ENCODE measurements at regions of chr14 and their contacts with region 1.

Region 1: DNA sequence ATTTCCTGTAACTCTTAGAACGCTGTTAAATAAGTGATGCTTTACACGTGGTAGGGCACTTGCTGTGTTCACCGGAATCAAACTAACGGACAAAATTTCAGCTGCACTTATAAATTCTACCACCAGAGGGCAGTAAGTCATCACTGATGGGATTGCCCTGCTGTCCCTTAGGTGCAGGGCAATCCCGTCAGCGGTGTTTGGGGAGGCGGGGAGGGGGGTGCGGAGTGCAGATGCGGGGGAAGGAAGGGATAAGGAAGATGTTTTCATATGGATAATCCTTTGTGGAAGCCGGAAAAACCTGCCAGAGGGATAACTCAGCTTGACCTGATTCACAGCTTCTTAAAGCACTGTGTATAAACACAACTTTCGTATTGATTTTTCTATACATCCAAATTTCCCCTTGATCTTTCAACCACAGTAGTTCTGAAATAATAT is 21.7 kb upstream of the SLC10A1 start:
- DNase-seq: peak; percentile 65
- ATAC-seq: peak; percentile 82
- H3K4me3 Mint-ChIP-seq: no peak overlapping the region
- H3K27ac Mint-ChIP-seq: no peak overlapping the region
- H3K4me1 Mint-ChIP-seq: peaks cover 4% of the 10 kb centered on the region
- H3K27me3 Mint-ChIP-seq: peaks cover 4% of the 10 kb centered on the region

Region 2: DNA sequence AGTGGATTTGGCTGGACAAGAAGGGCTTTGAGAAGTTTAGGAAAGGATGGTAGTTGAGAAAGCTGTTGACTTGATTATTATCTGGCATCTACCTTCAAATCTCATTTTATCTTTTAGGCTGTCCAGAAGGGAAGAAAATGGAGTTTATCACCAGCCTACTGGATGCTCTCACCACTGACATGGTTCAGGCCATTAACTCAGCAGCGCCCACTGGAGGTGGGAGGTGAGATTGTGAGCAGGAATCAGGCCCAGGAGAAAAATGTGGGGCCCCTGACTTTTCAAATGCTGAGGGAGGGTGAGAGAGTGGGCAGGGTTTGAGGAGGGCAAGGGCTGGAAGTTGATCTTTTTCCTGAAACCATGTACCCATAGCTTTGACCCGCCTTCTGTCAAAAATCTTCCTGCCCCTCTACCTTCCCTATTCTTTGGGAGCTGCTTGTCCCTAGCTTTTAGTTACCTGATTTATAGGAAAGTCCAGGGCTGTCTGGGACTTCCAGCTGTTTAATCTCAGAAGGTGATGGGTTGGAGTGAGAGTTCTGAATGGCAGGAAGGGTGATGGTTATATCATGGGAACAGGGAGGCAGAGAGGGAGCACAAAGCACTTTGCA is 194.6 kb after region 1 on chr14:
- CTCF ChIA-PET with region 1: interaction called, 5 read pairs
- POLR2A ChIA-PET with region 1: no interaction called
- intact Hi-C with region 1: loop called (anchors 1 to 5 kb)
- DNase-seq: peak; percentile 77
- ATAC-seq: peak; percentile 49
- H3K4me3 Mint-ChIP-seq: no peak overlapping the region
- H3K27ac Mint-ChIP-seq: no peak overlapping the region
- H3K4me1 Mint-ChIP-seq: peaks cover 5% of the 10 kb centered on the region
- H3K27me3 Mint-ChIP-seq: peaks cover 15% of the 10 kb centered on the region

Region 3: DNA sequence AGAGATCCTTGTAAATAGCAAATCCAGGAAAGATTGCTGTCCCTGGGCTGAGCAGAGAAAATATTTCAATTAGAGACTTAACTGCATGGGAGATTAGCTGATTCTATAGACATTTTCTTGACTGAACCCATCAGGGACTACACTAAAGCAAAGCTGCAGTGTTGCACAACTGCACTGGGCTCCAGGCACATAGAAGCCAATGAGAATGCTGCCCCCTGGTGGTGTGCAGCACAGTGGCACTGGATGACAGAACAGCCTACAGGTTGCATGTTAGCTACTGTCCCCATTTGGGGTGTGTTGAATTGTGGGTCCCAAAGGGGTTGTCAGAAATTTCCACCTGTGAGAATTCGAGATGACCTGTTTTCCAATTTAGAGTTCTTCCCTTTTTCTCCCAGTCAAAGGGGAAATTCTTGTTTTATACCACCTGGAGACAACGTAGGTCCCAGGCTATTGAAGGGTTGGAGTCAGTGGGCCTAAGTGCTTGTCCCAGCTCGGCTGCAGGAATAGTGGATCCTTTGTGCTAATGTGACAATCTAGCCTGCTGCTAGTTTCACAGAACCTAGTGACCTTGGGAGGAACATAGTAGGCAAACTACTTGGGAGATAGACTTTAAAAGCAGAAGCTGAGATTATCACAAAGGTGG is 255.3 kb after region 1 on chr14:
- CTCF ChIA-PET with region 1: interaction called, 20 read pairs
- POLR2A ChIA-PET with region 1: no interaction called
- intact Hi-C with region 1: loop called (anchors 1 kb)
- DNase-seq: peak; percentile 81
- ATAC-seq: peak; percentile 73
- H3K4me3 Mint-ChIP-seq: no peak overlapping the region
- H3K27ac Mint-ChIP-seq: no peak overlapping the region
- H3K4me1 Mint-ChIP-seq: no peaks in the 10 kb centered on the region
- H3K27me3 Mint-ChIP-seq: peaks cover 9% of the 10 kb centered on the region

Region 4: DNA sequence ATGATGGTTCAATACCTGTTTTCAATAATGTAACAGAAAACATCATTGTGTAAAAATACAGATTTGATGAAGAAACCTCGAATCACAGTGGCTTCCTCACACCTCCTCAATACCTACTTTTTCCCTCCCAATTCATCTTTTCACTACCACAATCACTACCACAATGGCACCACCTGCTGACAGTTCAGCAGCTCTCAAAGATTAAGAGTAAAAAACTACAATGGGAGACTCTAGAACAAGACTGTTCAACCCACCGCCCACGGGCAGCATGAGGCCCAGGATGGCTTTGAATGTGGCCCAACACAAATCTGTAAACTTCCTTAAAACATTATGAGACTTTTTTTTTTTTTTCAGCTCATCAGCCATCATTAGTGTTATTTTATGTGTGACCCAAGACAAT is 766.4 kb after region 1 on chr14:
- CTCF ChIA-PET with region 1: no interaction called
- POLR2A ChIA-PET with region 1: no interaction called
- intact Hi-C with region 1: loop called in 1 of 2 experiments (anchors 10 kb)
- DNase-seq: peak; percentile 68
- ATAC-seq: peak; percentile 75
- H3K4me3 Mint-ChIP-seq: no peak overlapping the region
- H3K27ac Mint-ChIP-seq: peak overlapping the region; percentile 12
- H3K4me1 Mint-ChIP-seq: peaks cover 6% of the 10 kb centered on the region
- H3K27me3 Mint-ChIP-seq: no peaks in the 10 kb centered on the region

Measured in activated CD4-positive, alpha-beta T cell treated with anti-CD3 and anti-CD28 coated beads for 36 hours (primary cell).